Vagina (tissue), 2 donors: ENCODE measurements at regions of chr2 and their contacts with region 1.

Region 1: DNA sequence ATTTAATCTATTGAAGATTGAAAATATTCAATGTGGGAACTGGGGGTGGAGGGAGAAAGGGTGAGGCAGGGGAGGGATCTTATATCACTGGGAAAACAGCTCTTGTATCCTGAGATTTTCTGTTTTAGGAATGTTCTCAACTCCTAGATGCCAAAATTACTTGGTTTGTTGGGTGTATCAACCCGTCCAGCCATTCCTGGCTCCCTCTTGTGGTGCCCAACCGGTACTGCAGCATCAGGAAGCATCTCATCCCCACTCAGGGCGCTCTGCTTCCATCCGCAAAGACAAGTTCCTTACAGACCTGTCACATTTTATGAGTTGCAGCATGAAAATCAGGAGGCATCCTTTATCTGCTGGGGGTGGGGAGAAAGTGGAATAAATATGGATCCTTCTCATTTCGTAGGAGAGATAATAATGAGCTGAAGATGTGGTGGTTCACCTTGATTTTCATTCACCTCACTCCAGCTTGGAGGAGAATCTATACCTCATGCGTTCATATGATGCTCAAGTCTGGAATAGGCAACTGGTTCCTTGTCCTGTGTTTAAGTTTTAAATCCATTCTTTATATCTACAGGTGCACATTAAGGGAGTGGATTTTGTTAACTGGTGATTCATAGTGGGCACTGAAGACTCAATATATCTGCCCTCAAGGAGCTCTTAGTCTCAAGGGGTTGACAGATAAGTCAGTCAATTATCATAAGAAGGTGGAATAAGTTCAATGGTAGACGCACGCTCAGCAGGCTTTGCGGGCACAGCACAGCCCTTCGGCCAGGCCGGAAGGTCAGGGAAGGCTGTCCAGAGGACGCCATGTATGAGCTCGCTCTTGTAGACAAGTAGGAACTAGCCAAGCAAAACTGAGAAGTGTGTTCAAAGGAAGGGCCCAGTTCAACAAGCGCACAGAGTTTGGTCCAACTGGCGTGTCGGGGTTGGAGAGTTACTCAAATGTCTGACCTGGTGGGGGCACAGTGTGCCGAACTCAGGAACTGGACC is 127.3 kb downstream of the RNF144A start:
- DNase-seq: no peak
- H3K4me3 ChIP-seq: no peak overlapping the region
- H3K27ac ChIP-seq: no peak overlapping the region
- H3K4me1 ChIP-seq: peaks cover 6% of the 10 kb centered on the region
- H3K27me3 ChIP-seq: no peaks in the 10 kb centered on the region
- CTCF ChIP-seq: peak; percentile 79 to 95 (median 82)
- POLR2A ChIP-seq: no peak

Region 2: GRCh38 chr2:6855855-6856547 is 188.6 kb before region 1 on chr2:
- intact Hi-C with region 1: no loop called
- DNase-seq: no peak
- H3K4me3 ChIP-seq: no peak overlapping the region
- H3K27ac ChIP-seq: no peak overlapping the region
- H3K4me1 ChIP-seq: no peaks in the 10 kb centered on the region
- H3K27me3 ChIP-seq: no peaks in the 10 kb centered on the region
- CTCF ChIP-seq: no peak
- POLR2A ChIP-seq: no peak

Region 3: GRCh38 chr2:6917071-6917760 is 127.3 kb before region 1 on chr2 and contains the start of gene RNF144A:
- intact Hi-C with region 1: loop called (anchors 10 kb)
- DNase-seq: no peak
- H3K4me3 ChIP-seq: peak within 1 kb of the TSS; percentile 78 to 90
- H3K27ac ChIP-seq: peak within 1 kb of the TSS; percentile 87
- H3K4me1 ChIP-seq: peaks cover 38% of the 10 kb centered on the region
- H3K27me3 ChIP-seq: no peaks in the 10 kb centered on the region
- CTCF ChIP-seq: peak in 2 of 3 experiments; percentile 30 to 61
- POLR2A ChIP-seq: peak in 1 of 2 donors; percentile 23
- total RNA-seq, gene RNF144A: 17.2 TPM